Stomach (tissue), 19 donors: ENCODE measurements at regions of chr1 and their contacts with region 1.

Region 1: GRCh38 chr1:31715087-31715872 is 11.5 kb upstream of the COL16A1 start:
- DNase-seq: peak; percentile 90 to 97
- H3K4me3 ChIP-seq: peak overlapping the region; percentile 33 to 45 (median 44)
- H3K27ac ChIP-seq: peak overlapping the region; percentile 75 to 94 (median 90)
- H3K4me1 ChIP-seq: peaks cover 33 to 59% (median 56%) of the 10 kb centered on the region in 4 donors
- H3K27me3 ChIP-seq: peaks cover 0 to 12% (median 0%) of the 10 kb centered on the region in 3 donors
- CTCF ChIP-seq: peak in 5 of 7 experiments; percentile 81 to 98 (median 87)
- EP300 ChIP-seq: no peak
- POLR2A ChIP-seq: no peak

Region 2: DNA sequence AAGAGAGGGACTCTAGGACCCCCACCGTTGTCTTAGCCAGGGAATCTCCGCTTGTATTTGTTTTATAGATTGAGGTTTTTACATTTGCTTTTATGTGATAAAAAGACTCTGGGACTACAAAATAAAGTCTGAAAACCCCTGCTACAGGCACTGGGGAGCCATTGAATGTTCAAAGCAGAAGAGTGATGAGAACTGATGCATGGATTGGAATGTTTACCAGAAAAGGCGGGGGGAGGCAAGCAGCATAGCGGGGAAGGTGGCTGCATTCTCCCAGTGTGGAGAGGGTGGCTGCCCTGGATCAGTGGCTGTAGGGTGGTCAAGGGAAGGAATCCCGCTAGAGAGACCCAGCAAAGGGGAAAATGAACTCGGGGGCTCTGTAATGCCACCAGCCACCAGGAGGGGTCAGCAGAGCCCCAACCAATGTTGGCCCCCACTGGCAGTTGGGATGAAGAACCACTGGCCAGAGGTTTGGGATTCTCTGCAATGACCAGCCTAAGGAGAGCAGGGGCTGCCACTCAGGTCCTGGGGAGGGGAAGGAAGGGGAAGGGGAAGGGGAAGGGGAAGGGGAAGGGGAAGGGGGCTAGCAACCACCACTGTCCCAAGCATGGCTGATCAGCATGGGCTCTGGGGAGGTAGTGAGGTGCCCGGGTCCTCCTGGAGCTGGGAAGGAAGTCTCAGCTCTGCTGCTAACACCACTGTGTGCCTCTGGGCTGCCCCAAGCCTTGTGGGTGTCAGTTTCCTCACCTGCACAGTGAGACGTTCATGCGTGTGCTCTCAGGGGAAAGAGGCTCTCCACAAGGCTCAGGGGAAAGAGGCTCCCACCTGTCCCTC is 51.4 kb before region 1 on chr1:
- intact Hi-C with region 1: loop called (anchors 5 kb)
- DNase-seq: peak; percentile 70 to 82
- H3K4me3 ChIP-seq: no peak overlapping the region
- H3K27ac ChIP-seq: no peak overlapping the region
- H3K4me1 ChIP-seq: peaks cover 17 to 41% (median 20%) of the 10 kb centered on the region in 4 donors
- H3K27me3 ChIP-seq: no peaks in the 10 kb centered on the region
- CTCF ChIP-seq: peak in 5 of 7 experiments; percentile 93 to 99 (median 96)
- EP300 ChIP-seq: no peak
- POLR2A ChIP-seq: no peak